Breast epithelium (tissue), 4 donors: ENCODE measurements at regions of chr11 and their contacts with region 1.

Region 1: DNA sequence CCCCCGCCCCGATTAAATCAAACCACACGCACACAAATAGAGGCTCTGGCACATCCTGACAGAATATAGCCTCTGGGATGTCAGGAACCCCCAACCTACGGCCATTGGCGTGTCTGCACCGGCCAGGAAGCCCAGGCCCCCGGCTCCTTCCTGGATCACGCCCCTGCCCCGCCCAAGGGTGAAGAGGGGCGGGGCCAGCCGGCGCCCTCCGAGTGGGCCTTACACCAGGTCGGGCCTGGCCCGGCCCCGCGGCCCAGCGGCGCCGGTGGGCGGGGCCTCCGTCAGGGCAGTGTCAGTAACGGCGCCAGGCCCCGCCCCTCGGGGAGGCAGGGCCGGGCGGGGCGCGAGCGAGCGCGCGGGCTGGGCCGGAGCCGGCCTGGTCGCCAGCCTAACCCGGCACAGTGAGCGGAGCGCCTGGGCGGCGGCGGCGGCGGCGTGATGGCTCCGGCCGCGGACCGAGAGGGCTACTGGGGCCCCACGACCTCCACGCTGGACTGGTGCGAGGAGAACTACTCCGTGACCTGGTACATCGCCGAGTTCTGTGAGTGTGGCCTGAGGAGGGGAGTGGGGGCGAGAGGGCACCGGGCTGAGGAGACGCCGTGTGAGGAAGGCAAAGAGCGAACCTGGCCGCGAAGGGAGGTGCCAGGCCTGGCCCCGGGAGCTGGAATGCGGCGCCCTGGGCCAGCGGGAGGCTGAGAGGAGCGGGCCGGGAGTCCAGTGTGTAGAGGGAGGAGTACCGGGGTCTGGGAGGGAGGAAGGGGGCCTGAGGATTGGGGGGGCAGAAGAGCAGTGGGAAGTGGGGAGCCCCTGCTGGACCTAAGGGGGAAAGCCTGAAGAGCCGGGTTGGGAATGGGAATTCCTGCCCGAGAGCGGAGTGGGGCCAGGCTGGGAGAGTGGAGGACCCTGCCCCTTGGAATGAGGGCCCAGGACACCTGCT is at the start of gene ACER3:
- DNase-seq: peak; percentile 83 to 90
- H3K4me3 ChIP-seq: peak within 1 kb of the TSS; percentile 66 to 74 (median 70)
- H3K27ac ChIP-seq: peak within 1 kb of the TSS; percentile 82 to 86
- H3K4me1 ChIP-seq: no peaks in the 10 kb centered on the region
- H3K27me3 ChIP-seq: no peaks in the 10 kb centered on the region
- CTCF ChIP-seq: no peak
- POLR2A ChIP-seq: no peak
- total RNA-seq, gene ACER3: 8.2 to 35.2 (median 12.9) TPM

Region 2: DNA sequence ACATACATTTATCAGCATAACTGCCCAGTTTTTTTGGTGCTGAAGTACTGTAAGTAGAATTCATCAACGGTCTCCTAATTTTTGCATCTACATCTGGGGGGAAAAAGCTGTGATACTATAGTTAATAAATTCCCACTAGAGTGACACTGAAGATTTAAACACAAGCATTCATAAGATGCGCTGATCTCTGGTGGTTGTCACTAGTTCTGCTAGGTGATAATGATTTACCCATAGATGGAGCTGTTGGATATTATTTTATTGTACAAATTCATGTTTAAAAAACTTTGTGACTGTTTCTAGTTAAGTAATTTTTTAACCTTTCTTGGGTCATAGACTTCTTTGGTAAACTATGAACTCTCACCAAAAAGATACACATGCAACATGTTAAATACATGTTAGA is 309.4 kb before region 1 on chr11:
- intact Hi-C with region 1: no loop called
- DNase-seq: no peak
- H3K4me3 ChIP-seq: no peak overlapping the region
- H3K27ac ChIP-seq: no peak overlapping the region
- H3K4me1 ChIP-seq: no peaks in the 10 kb centered on the region
- H3K27me3 ChIP-seq: no peaks in the 10 kb centered on the region
- CTCF ChIP-seq: peak in 1 of 3 donors; percentile 28
- POLR2A ChIP-seq: no peak

Region 3: GRCh38 chr11:76799066-76799804 is 61.6 kb before region 1 on chr11:
- intact Hi-C with region 1: no loop called
- DNase-seq: peak; percentile 67 to 80
- H3K4me3 ChIP-seq: peak overlapping the region; percentile 18 to 55 (median 30)
- H3K27ac ChIP-seq: peak overlapping the region; percentile 54 to 60
- H3K4me1 ChIP-seq: peaks cover 0 to 5% of the 10 kb centered on the region in 2 donors
- H3K27me3 ChIP-seq: no peaks in the 10 kb centered on the region
- CTCF ChIP-seq: peak; percentile 71 to 95 (median 95)
- POLR2A ChIP-seq: no peak

Region 4: GRCh38 chr11:76885390-76886097 is 24.7 kb after region 1 on chr11:
- intact Hi-C with region 1: loop called (anchors 1 kb)
- DNase-seq: no peak
- H3K4me3 ChIP-seq: no peak overlapping the region
- H3K27ac ChIP-seq: no peak overlapping the region
- H3K4me1 ChIP-seq: no peaks in the 10 kb centered on the region
- H3K27me3 ChIP-seq: no peaks in the 10 kb centered on the region
- CTCF ChIP-seq: no peak
- POLR2A ChIP-seq: no peak

Region 5: DNA sequence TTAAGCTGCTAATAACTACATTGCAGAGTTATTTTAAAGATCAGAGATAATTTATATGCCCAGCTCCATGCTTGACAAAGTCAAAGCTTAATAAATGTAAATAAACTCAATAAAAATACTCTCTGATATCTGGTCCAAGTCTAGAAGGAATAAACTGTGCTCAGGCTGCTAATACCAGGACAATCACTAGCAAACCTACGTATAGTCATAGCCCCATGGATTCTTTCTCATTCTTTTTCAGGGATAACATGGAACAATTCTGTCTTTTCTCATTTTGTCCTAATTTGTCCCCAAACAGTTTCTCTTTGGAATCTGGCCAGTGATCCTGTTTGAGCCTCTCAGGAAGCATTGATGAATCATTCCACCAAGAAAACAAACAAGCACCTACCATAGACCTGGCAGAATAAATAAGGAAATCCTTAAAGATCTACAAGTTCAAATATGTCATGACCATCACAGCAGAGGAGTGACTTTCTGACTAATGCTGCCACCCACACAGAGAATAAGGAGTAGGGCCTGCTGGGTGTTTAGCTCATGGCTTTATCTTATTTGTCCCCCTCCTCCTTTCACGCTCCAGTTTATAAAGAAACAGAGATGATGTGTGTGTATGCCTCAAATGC is 159.3 kb after region 1 on chr11:
- intact Hi-C with region 1: loop called (anchors 5 kb)
- DNase-seq: no peak
- H3K4me3 ChIP-seq: no peak overlapping the region
- H3K27ac ChIP-seq: no peak overlapping the region
- H3K4me1 ChIP-seq: no peaks in the 10 kb centered on the region
- H3K27me3 ChIP-seq: no peaks in the 10 kb centered on the region
- CTCF ChIP-seq: no peak
- POLR2A ChIP-seq: no peak

Region 6: GRCh38 chr11:78019821-78020220 is 1159.0 kb after region 1 on chr11:
- intact Hi-C with region 1: no loop called
- DNase-seq: no peak
- H3K4me3 ChIP-seq: no peak overlapping the region
- H3K27ac ChIP-seq: peak overlapping the region in 1 of 2 donors; percentile 40
- H3K4me1 ChIP-seq: no peaks in the 10 kb centered on the region
- H3K27me3 ChIP-seq: no peaks in the 10 kb centered on the region
- CTCF ChIP-seq: no peak
- POLR2A ChIP-seq: no peak